Colonic mucosa (tissue), 4 donors: ENCODE measurements at regions of chr15 and their contacts with region 1.

Region 1: DNA sequence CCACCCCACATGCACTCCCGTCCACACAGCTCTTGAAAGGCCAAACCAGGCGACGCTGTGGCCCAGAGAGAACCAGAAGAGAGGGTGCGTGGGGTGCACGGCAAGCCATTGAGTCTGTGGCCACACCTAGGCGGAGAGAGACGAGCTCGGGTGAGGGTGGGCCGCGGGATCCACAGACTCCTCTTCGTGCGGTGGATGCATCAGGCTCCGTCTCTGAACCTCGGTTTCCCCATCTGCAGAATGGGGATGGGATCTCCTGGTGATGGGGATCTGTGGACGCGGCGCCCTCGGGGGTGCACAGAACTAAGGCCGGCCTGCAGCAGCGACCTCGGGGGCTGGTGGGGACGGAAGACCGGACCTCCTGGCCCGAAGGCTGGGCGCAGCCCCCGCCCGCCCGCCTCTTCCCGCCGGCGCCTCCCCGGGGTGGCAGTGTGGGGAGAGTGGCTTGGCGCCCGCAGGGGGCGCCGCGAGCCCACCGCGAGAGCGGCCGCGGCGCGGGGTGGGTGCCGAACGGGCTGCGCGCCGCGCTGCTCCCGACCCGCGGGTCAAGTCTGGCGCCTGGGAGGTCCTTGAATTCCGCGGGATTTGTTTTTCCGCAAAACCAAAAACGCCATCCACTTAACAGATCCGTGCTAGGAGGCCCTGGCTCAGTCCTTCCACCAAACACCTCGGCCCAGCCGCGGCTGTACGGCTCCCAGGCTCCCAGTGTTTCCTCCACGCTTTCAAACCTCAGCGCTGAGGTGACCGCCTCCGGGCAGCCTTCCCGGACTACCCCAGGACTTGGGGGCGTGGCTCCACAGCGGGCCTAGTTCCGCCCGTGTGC is 13.2 kb upstream of the ADPGK start:
- DNase-seq: peak; percentile 73
- H3K4me3 ChIP-seq: peak overlapping the region; percentile 61
- H3K27ac ChIP-seq: no peak overlapping the region
- H3K4me1 ChIP-seq: no peaks in the 10 kb centered on the region
- H3K27me3 ChIP-seq: no peaks in the 10 kb centered on the region
- CTCF ChIP-seq: peak; percentile 19

Region 2: DNA sequence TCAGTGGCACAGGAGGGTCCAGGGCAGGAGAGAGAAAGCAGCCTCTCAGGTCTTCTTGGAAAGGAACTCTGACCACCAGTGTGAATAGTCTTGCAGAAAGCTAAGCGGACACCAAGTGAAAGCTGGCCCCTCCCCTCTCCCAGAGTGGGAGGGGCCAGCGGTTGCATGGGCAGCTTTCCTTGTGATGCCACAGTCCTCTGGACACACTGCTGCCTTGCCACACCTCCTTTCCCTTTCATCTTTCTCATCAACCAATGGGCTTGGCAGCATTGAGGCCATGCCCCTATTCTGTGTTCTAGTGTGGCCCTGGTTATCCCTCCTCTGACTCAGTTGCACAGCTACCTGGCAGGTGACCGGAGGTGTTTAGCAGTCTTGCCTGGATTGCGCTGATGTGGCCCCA is 191.9 kb before region 1 on chr15:
- intact Hi-C with region 1: no loop called
- DNase-seq: no peak
- H3K4me3 ChIP-seq: no peak overlapping the region
- H3K27ac ChIP-seq: no peak overlapping the region
- H3K4me1 ChIP-seq: no peaks in the 10 kb centered on the region
- H3K27me3 ChIP-seq: no peaks in the 10 kb centered on the region
- CTCF ChIP-seq: no peak

Region 3: DNA sequence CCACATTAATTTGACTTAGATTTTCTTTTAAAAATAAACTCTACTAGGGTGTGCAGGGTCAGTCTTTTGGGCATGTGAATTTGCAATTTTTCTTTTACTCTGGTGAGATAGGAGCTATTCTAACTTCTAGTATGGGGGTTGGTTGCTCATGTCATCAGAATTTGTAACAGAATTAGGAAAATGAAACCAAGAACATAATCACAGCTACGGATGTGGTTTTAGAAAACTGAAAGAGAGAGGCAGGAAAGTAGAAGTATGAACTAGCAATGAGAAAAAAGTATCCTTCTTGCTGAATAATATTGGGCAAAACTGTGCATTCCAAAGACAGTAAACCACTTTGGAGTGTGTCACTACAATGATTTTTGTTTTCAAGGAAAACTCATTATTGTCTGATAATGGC is 56.5 kb before region 1 on chr15:
- intact Hi-C with region 1: no loop called
- DNase-seq: no peak
- H3K4me3 ChIP-seq: no peak overlapping the region
- H3K27ac ChIP-seq: no peak overlapping the region
- H3K4me1 ChIP-seq: no peaks in the 10 kb centered on the region
- H3K27me3 ChIP-seq: no peaks in the 10 kb centered on the region
- CTCF ChIP-seq: no peak

Region 4: GRCh38 chr15:72902245-72902918 is 105.7 kb after region 1 on chr15:
- intact Hi-C with region 1: no loop called
- DNase-seq: peak; percentile 37
- H3K4me3 ChIP-seq: no peak overlapping the region
- H3K27ac ChIP-seq: no peak overlapping the region
- H3K4me1 ChIP-seq: no peaks in the 10 kb centered on the region
- H3K27me3 ChIP-seq: no peaks in the 10 kb centered on the region
- CTCF ChIP-seq: no peak

Region 5: GRCh38 chr15:72970933-72971770 is 174.4 kb after region 1 on chr15:
- intact Hi-C with region 1: loop called (anchors 10 kb)
- DNase-seq: no peak
- H3K4me3 ChIP-seq: no peak overlapping the region
- H3K27ac ChIP-seq: no peak overlapping the region
- H3K4me1 ChIP-seq: no peaks in the 10 kb centered on the region
- H3K27me3 ChIP-seq: no peaks in the 10 kb centered on the region
- CTCF ChIP-seq: no peak

Region 6: GRCh38 chr15:73081321-73081958 is 284.7 kb after region 1 on chr15:
- intact Hi-C with region 1: loop called (anchors 2 kb)
- DNase-seq: peak; percentile 47
- H3K4me3 ChIP-seq: no peak overlapping the region
- H3K27ac ChIP-seq: no peak overlapping the region
- H3K4me1 ChIP-seq: peaks cover 12% of the 10 kb centered on the region
- H3K27me3 ChIP-seq: no peaks in the 10 kb centered on the region
- CTCF ChIP-seq: peak; percentile 58